ENCODE measurements at regions of chr14 and their contacts with region 1.

Region 1: GRCh38 chr14:78566026-78566858 is 396.1 kb downstream of the NRXN3 start:
- DNase-seq: peak; percentile 37 to 62
- ATAC-seq: peak; percentile 98 to 100
- H3K4me3 ChIP-seq: no peak overlapping the region
- H3K27ac ChIP-seq: no peak overlapping the region
- H3K4me1 ChIP-seq: no peaks in the 10 kb centered on the region
- CTCF ChIP-seq: peak; percentile 64
- EP300 ChIP-seq: no peak
- POLR2A ChIP-seq: no peak
- RAD21 ChIP-seq: peak; percentile 71 to 83

Region 2: GRCh38 chr14:78022059-78022458 is 544.2 kb before region 1 on chr14:
- CTCF ChIA-PET with region 1: interaction called, 32 read pairs
- POLR2A ChIA-PET with region 1: no interaction called
- DNase-seq: peak; percentile 38 to 80
- ATAC-seq: peak; percentile 86 to 99
- H3K4me3 ChIP-seq: no peak overlapping the region
- H3K27ac ChIP-seq: no peak overlapping the region
- H3K4me1 ChIP-seq: no peaks in the 10 kb centered on the region
- CTCF ChIP-seq: peak; percentile 52
- EP300 ChIP-seq: no peak
- POLR2A ChIP-seq: no peak
- RAD21 ChIP-seq: peak; percentile 78 to 93

Region 3: GRCh38 chr14:78028471-78028870 is 537.8 kb before region 1 on chr14:
- CTCF ChIA-PET with region 1: interaction called, 32 read pairs
- POLR2A ChIA-PET with region 1: no interaction called
- DNase-seq: no peak
- ATAC-seq: no peak
- H3K4me3 ChIP-seq: no peak overlapping the region
- H3K27ac ChIP-seq: no peak overlapping the region
- H3K4me1 ChIP-seq: no peaks in the 10 kb centered on the region
- CTCF ChIP-seq: no peak
- EP300 ChIP-seq: no peak
- POLR2A ChIP-seq: no peak
- RAD21 ChIP-seq: no peak

Region 4: GRCh38 chr14:78581229-78581628 is 15.0 kb after region 1 on chr14:
- CTCF ChIA-PET with region 1: interaction called, 30 read pairs
- POLR2A ChIA-PET with region 1: no interaction called
- DNase-seq: no peak
- ATAC-seq: no peak
- H3K4me3 ChIP-seq: no peak overlapping the region
- H3K27ac ChIP-seq: no peak overlapping the region
- H3K4me1 ChIP-seq: no peaks in the 10 kb centered on the region
- CTCF ChIP-seq: no peak
- EP300 ChIP-seq: no peak
- POLR2A ChIP-seq: no peak
- RAD21 ChIP-seq: no peak

Region 5: DNA sequence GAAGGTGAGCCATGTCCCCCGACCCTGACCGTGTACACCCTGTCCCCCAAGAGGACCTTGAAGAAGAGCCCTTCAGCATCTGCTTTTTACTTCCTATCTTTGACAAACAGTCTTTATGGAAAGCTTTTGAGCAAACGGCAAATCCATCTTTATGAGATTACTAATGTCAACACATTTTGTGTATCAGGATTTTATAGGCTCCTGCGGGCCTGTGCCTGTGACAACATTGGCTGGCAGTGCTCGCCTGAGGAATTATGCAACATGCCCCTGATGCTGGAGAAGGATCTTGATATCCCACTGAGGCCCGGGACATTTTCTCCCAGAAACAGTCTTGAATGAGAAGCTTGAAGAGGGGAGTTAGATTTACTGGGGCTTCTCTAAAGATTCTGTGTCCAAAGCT is 20.4 kb after region 1 on chr14:
- CTCF ChIA-PET with region 1: interaction called, 30 read pairs
- POLR2A ChIA-PET with region 1: no interaction called
- DNase-seq: no peak
- ATAC-seq: no peak
- H3K4me3 ChIP-seq: no peak overlapping the region
- H3K27ac ChIP-seq: no peak overlapping the region
- H3K4me1 ChIP-seq: no peaks in the 10 kb centered on the region
- CTCF ChIP-seq: no peak
- EP300 ChIP-seq: no peak
- POLR2A ChIP-seq: no peak
- RAD21 ChIP-seq: no peak